ENCODE measurements at regions of chr17 and their contacts with region 1.

Region 1: DNA sequence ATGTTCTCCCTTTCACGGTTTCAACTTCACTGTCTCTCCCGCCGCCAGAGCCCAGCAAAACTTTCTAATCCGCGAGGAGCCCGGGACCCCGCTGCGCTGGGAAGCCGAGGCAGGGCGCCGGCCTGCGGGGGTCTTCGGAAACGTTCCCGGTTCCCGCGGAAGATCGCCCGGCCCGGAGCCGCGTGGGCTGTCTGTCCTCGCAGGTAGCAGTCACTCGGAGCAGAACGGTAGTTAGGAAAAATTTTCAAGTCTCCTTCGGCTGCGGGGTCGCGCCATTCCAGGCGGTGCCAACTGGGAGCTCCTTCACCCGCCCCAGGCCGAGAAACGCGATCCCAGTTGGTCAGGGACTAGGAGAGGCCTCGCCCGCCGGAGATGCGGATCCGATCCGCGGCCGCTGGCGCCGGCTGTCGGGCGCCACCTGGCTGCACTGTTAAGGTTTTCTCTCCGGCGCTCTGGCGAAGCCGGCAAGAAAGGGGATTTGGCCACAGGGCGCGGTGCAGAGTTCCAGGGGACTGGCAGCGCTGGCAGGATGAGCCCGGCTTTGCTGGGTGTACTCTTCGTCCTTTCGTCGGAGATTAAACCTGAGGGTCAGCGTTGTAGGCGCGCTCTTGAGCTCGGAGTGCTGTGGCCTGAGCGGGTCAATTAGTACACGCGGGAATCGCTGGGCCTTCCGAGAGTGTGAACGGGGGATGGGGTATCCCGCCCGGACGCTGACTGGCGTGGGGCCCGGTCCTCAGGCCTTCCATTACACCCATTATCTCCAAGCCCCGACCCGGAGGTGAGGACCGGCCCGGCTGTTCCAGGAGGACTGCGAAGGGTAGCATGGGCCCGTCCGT is 135.4 kb downstream of the KCNJ12 start:
- H3K4me3 ChIP-seq: peak overlapping the region; percentile 37
- H3K27ac ChIP-seq: peak overlapping the region; percentile 57; the same call in 1 of the 2 replicates
- H3K4me1 ChIP-seq: 0 out of 2 replicates have a peak, but pooled peaks cover 5% of the 10 kb centered on the region
- CTCF ChIP-seq: peak; percentile 85

Region 2: GRCh38 chr17:21119247-21119918 is 392.2 kb before region 1 on chr17:
- CTCF ChIA-PET with region 1: interaction called, 17 read pairs
- POLR2A ChIA-PET with region 1: no interaction called
- H3K4me3 ChIP-seq: no peak overlapping the region
- H3K27ac ChIP-seq: no peak overlapping the region
- H3K4me1 ChIP-seq: no peaks in the 10 kb centered on the region
- CTCF ChIP-seq: peak; percentile 76; the same call in 1 of the 2 replicates

Region 3: DNA sequence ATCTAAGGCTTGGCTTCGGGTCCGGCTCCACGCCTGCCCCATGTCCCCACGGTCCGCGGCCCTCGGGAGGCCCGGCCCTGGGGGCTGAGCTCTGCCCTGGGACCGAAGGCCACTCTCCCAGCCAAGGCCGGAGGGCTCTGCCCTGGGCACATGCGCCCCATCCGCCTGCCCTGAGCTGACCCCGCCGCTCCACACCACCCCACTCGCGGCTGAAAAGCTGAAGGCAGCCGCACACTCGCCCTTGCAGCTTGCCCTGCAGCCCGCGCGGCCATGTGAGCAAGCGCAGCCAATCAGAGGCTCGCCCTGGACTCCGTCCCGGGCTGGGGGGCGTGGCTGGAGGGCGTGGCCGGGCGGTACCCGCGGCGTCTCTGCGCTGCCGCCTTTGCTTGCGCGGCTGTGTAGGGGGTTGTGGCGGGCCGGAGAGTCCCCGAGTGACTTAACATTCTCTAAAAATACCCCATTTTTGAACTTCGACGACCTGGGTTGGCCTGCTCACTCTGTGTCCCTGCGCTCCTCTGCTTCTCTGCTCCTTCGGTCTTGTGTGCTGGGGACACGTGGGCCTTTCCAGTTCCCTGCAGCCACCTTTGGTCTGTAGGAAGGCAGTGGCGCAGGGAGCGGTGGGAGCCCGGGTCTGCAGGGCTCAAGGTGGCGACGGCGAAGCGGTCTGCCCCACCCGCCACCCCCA is 235.9 kb before region 1 on chr17:
- CTCF ChIA-PET with region 1: interaction called, 63 read pairs
- POLR2A ChIA-PET with region 1: no interaction called
- H3K4me3 ChIP-seq: peak overlapping the region; percentile 62
- H3K27ac ChIP-seq: peak overlapping the region; percentile 32; the same call in 1 of the 2 replicates
- H3K4me1 ChIP-seq: peaks cover 4% of the 10 kb centered on the region; the same call in 1 of the 2 replicates
- CTCF ChIP-seq: peak; percentile 35; the same call in 1 of the 2 replicates

Region 4: DNA sequence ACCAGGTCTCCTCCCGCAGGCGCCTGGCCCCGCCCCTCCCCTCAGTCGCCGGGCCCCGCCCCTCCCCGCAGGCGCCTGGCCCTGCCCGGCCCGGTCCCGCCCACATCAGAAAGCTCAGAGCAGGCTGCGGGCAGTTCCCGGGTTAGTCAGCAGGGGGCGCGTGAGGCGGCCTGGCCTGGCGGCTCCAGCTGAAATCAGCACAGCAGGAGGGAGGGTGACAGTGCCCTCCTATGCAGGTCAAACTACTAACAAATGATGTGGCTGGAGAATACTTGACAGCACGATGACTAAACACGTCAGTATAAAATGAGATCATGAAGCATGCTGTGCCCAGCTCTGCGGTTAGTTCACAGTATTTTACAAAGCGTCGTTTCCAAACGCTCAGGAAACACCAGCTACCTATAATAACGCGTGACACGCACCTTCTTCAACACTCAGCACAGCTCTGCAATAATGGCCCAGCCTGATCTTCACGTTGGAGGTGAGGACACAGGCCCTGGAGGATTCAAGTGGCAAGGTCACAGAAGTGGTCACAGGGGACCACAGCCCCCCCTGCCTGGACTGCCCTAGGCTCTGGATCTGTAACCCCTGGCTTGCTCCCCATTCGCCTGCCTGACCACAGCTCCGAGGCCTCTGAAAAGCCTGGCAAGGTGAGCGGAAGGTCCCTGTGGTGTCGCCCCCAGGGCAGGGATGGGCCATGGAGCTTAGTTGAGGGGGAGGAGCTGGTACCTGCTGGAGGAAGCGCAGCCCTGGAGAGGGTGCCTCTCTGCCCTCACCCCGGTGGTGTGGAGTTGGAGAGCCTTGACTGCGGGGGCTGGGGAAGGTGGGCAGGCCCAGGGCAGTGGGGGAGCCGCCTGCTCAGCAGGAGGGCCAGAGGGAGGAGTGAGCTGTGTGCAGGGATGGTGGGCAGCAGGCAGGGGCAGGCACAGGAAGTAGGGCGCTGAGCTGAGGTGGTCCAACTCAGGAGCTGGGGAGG is 54.2 kb before region 1 on chr17:
- CTCF ChIA-PET with region 1: interaction called, 66 read pairs
- POLR2A ChIA-PET with region 1: interaction called, 6 read pairs
- H3K4me3 ChIP-seq: no peak overlapping the region; the same call in none of the 2 replicates
- H3K27ac ChIP-seq: no peak overlapping the region
- H3K4me1 ChIP-seq: peaks cover 6% of the 10 kb centered on the region
- CTCF ChIP-seq: peak; percentile 91

Region 5: GRCh38 chr17:21524211-21524591 is 12.6 kb after region 1 on chr17:
- CTCF ChIA-PET with region 1: interaction called, 52 read pairs
- POLR2A ChIA-PET with region 1: no interaction called
- H3K4me3 ChIP-seq: no peak overlapping the region
- H3K27ac ChIP-seq: no peak overlapping the region
- H3K4me1 ChIP-seq: no peaks in the 10 kb centered on the region
- CTCF ChIP-seq: no peak

Measured in HEK293 (cell line).